ENCODE measurements at regions of chr6 and their contacts with region 1.

Region 1: GRCh38 chr6:73520688-73521350 is at the start of gene EEF1A1:
- DNase-seq: peak; percentile 97 to 99
- H3K4me3 ChIP-seq: peak within 1 kb of the TSS; percentile 87 to 100 (median 97)
- H3K27ac ChIP-seq: peak within 1 kb of the TSS; percentile 98
- H3K4me1 ChIP-seq: peaks cover 0 to 8% (median 4%) of the 10 kb centered on the region in 4 experiments; a peak in 3 of 7 replicates
- H3K27me3 ChIP-seq: no peaks in the 10 kb centered on the region
- CTCF ChIP-seq: no peak
- EP300 ChIP-seq: 0 out of 3 replicates have a peak, but pooled peaks of 1 of the 2 experiments have one; percentile 84
- POLR2A ChIP-seq: peak; percentile 99 to 100
- RAD21 ChIP-seq: peak; percentile 40 to 43; a peak in 3 of 4 replicates
- total RNA-seq, gene EEF1A1: 13,468 and 13,823 TPM in 2 replicates

Region 2: GRCh38 chr6:72999995-73000394 is 520.8 kb before region 1 on chr6:
- CTCF ChIA-PET with region 1: no interaction called
- POLR2A ChIA-PET with region 1: no interaction called
- DNase-seq: no peak
- H3K4me3 ChIP-seq: no peak overlapping the region
- H3K27ac ChIP-seq: no peak overlapping the region
- H3K4me1 ChIP-seq: no peaks in the 10 kb centered on the region
- H3K27me3 ChIP-seq: no peaks in the 10 kb centered on the region
- CTCF ChIP-seq: no peak
- EP300 ChIP-seq: no peak
- POLR2A ChIP-seq: no peak
- RAD21 ChIP-seq: no peak

Region 3: DNA sequence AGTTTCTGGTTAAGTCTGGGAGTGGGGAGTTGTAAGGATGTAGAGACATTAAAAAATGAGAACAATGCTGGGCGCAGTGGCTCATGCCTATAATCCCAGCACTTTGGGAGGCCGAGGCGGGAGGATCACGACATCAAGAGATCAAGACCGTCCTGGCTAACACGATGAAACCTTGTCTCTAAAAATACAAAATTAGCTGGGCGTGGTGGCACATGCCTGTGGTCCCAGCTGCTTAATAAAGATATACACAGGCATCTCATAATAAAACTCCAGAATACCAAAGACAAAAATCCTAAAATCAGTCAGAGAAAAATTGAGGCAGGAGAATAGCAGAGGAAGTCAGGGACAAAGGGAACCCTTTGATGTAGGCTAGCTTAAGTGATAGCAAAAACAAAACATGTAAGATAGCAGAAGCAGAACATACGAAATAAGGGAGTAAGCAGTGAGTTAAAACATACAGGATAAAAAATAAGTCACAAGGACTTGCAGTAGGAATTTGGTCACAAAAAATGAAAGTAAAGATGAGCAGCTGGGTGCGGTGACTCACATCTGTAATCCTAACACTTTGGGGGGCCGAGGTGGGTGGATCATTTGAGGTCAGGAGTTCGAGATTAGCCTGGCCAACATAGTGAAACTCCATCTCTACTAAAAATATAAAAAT is 102.6 kb before region 1 on chr6:
- CTCF ChIA-PET with region 1: no interaction called
- POLR2A ChIA-PET with region 1: no interaction called
- DNase-seq: no peak
- H3K4me3 ChIP-seq: no peak overlapping the region
- H3K27ac ChIP-seq: no peak overlapping the region
- H3K4me1 ChIP-seq: no peaks in the 10 kb centered on the region
- H3K27me3 ChIP-seq: peaks cover 0 to 1% (median 0%) of the 10 kb centered on the region in 4 experiments; a peak in 1 of 7 replicates
- CTCF ChIP-seq: no peak
- EP300 ChIP-seq: no peak
- POLR2A ChIP-seq: no peak
- RAD21 ChIP-seq: no peak

Region 4: DNA sequence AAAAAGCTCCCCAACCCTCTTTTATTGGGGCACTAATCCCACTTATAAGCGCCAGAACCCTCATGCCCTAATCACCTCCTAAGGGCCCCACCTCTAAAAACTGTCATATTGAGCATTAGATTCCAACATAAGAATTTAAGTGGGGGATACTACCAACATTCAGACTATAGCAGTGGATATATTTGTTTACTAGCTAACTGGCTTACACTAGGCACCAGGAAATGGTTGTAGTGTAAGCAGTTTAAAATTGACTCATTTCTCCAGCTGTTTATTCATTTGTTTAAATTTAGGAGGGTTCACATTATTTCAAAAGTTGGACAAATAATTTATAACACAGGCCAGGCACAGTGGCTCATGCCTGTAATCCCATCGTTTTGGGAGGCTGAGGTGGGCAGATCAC is 36.4 kb before region 1 on chr6:
- CTCF ChIA-PET with region 1: no interaction called
- POLR2A ChIA-PET with region 1: interaction called, 15 read pairs
- DNase-seq: no peak
- H3K4me3 ChIP-seq: no peak overlapping the region
- H3K27ac ChIP-seq: no peak overlapping the region
- H3K4me1 ChIP-seq: no peaks in the 10 kb centered on the region
- H3K27me3 ChIP-seq: no peaks in the 10 kb centered on the region
- CTCF ChIP-seq: no peak
- EP300 ChIP-seq: no peak
- POLR2A ChIP-seq: no peak
- RAD21 ChIP-seq: no peak

Region 5: DNA sequence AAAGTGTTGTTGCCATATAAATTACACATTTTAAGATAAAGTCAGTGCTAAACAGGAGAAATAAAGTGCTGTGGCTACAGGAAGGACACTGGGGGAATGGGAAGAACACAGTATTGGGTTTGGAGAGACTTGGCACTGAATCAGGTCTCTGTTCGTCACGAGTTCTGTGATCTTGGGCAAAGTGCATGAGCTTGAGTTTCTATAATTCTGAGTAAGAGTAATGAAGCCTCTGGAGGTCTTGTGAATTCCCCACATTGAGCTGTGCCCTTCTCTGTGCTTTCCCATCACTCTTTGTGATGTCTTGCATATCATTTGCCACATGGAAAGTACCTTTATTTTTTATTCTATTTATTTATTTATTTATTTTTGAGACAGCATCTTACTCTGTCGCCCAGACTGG is 16.9 kb after region 1 on chr6:
- CTCF ChIA-PET with region 1: no interaction called
- POLR2A ChIA-PET with region 1: interaction called, 267 read pairs
- DNase-seq: no peak
- H3K4me3 ChIP-seq: no peak overlapping the region
- H3K27ac ChIP-seq: no peak overlapping the region
- H3K4me1 ChIP-seq: no peaks in the 10 kb centered on the region
- H3K27me3 ChIP-seq: no peaks in the 10 kb centered on the region
- CTCF ChIP-seq: no peak
- EP300 ChIP-seq: no peak
- POLR2A ChIP-seq: no peak
- RAD21 ChIP-seq: no peak

Region 6: DNA sequence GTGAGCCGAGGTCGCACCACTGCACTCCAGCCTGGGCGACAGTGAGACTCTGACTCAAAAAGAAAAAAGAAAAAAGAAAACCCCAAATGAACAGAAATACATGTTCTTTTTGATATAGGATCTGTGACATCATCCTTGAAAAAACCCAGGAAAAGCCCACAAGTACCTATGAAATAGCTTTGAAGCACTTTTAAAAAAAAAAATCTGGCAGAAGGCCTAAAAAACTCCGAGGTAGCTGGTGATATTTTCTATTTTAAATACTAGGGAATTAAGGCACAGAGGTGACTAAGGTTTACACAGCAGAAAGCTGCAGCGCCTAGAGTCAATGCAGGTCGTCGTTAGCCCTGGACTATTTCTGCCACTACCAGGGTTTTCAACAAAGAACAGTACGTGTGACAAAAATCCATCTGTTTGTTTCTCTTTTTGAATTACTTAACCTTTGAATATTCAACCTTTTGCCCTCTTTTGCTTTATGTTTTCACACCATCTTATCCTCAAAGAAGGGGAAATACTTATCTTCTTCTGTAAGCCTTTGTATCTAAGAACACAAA is 39.4 kb after region 1 on chr6:
- CTCF ChIA-PET with region 1: interaction called, 23 read pairs
- POLR2A ChIA-PET with region 1: interaction called, 1,482 read pairs
- DNase-seq: no peak
- H3K4me3 ChIP-seq: no peak overlapping the region
- H3K27ac ChIP-seq: no peak overlapping the region
- H3K4me1 ChIP-seq: peaks cover 0 to 7% (median 4%) of the 10 kb centered on the region in 4 experiments; a peak in 5 of 7 replicates
- H3K27me3 ChIP-seq: no peaks in the 10 kb centered on the region
- CTCF ChIP-seq: no peak
- EP300 ChIP-seq: no peak
- POLR2A ChIP-seq: no peak
- RAD21 ChIP-seq: no peak

Region 7: DNA sequence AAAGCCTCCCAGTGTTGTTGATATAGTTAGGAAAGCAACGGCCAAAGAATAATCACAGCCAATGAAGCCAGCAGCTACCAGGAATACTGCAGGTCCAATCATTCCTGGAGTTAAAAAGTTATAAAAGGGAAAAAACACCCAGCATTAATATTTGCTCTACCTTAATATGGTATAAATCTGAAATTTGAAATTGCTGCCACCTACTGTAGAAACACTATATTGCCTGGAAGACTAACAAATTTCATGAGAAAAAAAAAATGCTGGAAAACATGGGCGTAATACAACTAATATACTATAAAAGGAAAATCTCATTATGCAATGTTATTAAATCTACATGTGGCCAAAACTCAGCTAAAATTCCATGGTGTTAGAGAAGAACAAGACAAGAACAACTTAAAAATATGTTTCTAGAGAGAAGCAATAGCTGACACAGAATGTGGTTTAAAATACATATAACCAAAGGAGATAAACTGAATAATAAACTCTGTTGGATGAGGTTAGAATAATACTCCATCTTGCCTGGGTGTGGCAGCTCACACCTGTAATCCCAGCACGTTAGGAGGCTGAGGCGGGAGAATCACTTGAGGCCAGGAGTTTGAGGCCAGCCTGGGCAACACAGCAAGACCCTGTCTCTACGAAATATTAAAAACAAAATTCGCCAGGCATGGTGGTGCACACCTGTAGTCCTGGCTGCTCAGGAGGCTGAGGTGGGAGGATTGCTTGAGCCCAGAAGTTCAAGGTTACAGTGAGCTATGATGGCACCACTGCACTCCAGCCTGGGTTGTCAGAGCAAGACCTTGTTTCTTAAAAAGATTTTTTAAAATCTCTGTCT is 89.8 kb after region 1 on chr6:
- CTCF ChIA-PET with region 1: interaction called, 35 read pairs
- POLR2A ChIA-PET with region 1: interaction called, 430 read pairs
- DNase-seq: no peak
- H3K4me3 ChIP-seq: no peak overlapping the region
- H3K27ac ChIP-seq: no peak overlapping the region
- H3K4me1 ChIP-seq: no peaks in the 10 kb centered on the region
- H3K27me3 ChIP-seq: no peaks in the 10 kb centered on the region
- CTCF ChIP-seq: peak in 2 of 3 experiments; percentile 1 to 35; a peak in 2 of 4 replicates
- EP300 ChIP-seq: no peak
- POLR2A ChIP-seq: no peak
- RAD21 ChIP-seq: peak; percentile 55 to 60

Region 8: GRCh38 chr6:73631849-73632248 is 111.0 kb after region 1 on chr6:
- CTCF ChIA-PET with region 1: no interaction called
- POLR2A ChIA-PET with region 1: interaction called, 50 read pairs
- DNase-seq: no peak
- H3K4me3 ChIP-seq: no peak overlapping the region
- H3K27ac ChIP-seq: no peak overlapping the region
- H3K4me1 ChIP-seq: no peaks in the 10 kb centered on the region
- H3K27me3 ChIP-seq: no peaks in the 10 kb centered on the region
- CTCF ChIP-seq: no peak
- EP300 ChIP-seq: no peak
- POLR2A ChIP-seq: no peak
- RAD21 ChIP-seq: no peak

Region 9: GRCh38 chr6:73653571-73654424 is 133.0 kb after region 1 on chr6 and contains the start of gene SLC17A5:
- CTCF ChIA-PET with region 1: interaction called, 7 read pairs
- POLR2A ChIA-PET with region 1: interaction called, 196 read pairs
- DNase-seq: peak; percentile 87 to 94
- H3K4me3 ChIP-seq: peak within 1 kb of the TSS; percentile 63 to 99 (median 86)
- H3K27ac ChIP-seq: peak within 1 kb of the TSS; percentile 71; the same call in 1 of the 2 replicates
- H3K4me1 ChIP-seq: peaks cover 0 to 9% (median 5%) of the 10 kb centered on the region in 4 experiments; a peak in 3 of 7 replicates
- H3K27me3 ChIP-seq: no peaks in the 10 kb centered on the region
- CTCF ChIP-seq: no peak
- EP300 ChIP-seq: 0 out of 3 replicates have a peak, but pooled peaks of 1 of the 2 experiments have one; percentile 38
- POLR2A ChIP-seq: peak; percentile 63 to 82
- RAD21 ChIP-seq: no peak
- total RNA-seq, gene SLC17A5: 11.9 and 14.2 TPM in 2 replicates